PC-9 (cell line): ENCODE measurements at regions of chr1 and their contacts with region 1.

Region 1: DNA sequence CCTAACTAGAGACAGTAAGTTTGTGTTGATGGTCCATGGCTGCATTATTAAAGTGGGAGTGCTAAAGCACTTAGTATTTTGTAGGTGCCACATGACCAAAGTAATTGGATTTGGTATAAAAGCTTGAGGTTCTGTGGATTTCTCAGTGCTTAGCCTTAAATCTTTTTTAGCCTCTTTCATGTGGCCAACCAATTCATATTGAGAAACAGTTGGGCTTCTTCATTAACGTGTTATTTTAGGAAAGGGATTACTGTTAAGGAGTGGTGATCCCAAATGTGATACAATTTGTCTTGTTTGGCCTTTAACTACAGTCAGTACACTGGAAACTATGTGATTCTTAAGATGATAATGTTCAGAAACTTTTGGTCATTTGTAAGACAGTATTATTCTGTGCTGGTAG is 25.5 kb downstream of the MAN1A2 start:
- DNase-seq: no peak
- H3K4me3 ChIP-seq: no peak overlapping the region
- H3K27ac ChIP-seq: no peak overlapping the region
- H3K4me1 ChIP-seq: no peaks in the 10 kb centered on the region
- H3K27me3 ChIP-seq: no peaks in the 10 kb centered on the region
- CTCF ChIP-seq: no peak

Region 2: DNA sequence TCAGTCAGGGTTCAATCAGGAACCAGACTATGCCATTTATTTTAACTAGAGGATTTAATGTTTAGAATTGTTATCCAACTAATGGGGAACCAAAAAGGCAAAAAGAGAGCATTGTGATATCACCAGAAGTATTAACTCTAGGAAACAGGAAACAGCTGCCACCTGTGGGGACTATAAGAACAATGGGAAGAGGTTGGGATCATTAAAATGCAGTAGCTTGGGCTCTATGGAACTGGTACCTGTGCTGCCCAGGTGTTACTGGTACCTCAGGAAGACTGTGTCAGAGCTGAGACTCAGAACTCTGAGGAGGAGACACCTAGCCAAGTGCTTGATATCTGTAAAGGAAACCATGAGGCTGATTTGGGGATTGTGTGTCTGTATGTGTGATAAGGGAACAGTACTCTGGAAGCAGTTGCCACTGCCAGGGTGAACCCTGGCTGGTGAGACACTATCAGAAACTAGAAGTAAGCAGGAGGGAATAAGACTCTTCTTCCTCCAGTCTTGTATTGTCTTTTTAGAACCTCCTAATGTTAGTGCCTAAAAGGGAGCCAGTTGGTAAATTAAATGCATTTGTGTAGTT is 23.9 kb after region 1 on chr1:
- CTCF ChIA-PET with region 1: no interaction called
- POLR2A ChIA-PET with region 1: no interaction called
- intact Hi-C with region 1: no loop called
- DNase-seq: no peak
- H3K4me3 ChIP-seq: no peak overlapping the region
- H3K27ac ChIP-seq: no peak overlapping the region
- H3K4me1 ChIP-seq: no peaks in the 10 kb centered on the region
- H3K27me3 ChIP-seq: no peaks in the 10 kb centered on the region
- CTCF ChIP-seq: no peak

Region 3: DNA sequence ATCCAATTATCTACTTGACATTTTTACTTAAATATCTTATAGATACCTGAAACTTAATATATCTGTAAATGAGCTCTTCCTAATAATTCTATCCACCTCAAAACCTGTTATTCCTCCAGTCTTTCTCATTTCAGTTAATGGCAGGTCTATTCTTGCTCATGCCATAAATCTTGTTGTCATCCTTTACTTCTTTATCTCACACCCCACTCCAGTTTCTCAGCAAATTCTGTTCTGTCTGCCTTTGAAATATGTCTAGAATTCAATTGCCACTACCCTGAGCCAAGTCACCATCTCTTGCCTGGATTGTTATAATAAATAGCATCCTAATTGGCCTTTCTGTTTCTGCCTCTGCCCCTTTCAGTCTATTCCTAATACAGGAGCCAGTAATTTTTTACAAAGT is 80.3 kb after region 1 on chr1:
- CTCF ChIA-PET with region 1: no interaction called
- POLR2A ChIA-PET with region 1: no interaction called
- intact Hi-C with region 1: loop called (anchors 10 kb)
- DNase-seq: no peak
- H3K4me3 ChIP-seq: no peak overlapping the region
- H3K27ac ChIP-seq: no peak overlapping the region
- H3K4me1 ChIP-seq: no peaks in the 10 kb centered on the region
- H3K27me3 ChIP-seq: no peaks in the 10 kb centered on the region
- CTCF ChIP-seq: no peak

Region 4: DNA sequence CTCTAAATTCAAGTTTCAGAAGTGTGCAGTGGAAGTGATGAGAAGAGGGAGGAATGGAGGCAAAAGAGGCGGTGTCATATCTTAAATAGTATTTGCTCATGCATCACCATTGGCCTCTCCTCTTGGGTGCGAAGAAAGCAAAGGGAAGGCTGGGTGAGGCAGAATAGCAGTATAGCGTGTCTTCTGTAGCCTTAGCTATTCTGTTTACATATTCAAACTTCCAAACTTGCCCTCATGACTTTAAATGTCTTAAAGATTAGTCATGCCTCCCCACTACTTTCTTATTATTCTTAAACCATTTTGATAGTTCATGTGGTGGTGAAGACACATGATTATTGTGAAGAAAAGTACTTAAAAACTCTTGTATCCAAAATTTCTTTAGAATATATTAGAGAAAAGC is 108.5 kb after region 1 on chr1:
- CTCF ChIA-PET with region 1: no interaction called
- POLR2A ChIA-PET with region 1: no interaction called
- intact Hi-C with region 1: no loop called
- DNase-seq: no peak
- H3K4me3 ChIP-seq: no peak overlapping the region
- H3K27ac ChIP-seq: no peak overlapping the region
- H3K4me1 ChIP-seq: no peaks in the 10 kb centered on the region
- H3K27me3 ChIP-seq: no peaks in the 10 kb centered on the region
- CTCF ChIP-seq: no peak

Region 5: GRCh38 chr1:117615474-117615873 is 222.7 kb after region 1 on chr1:
- CTCF ChIA-PET with region 1: no interaction called
- POLR2A ChIA-PET with region 1: no interaction called
- intact Hi-C with region 1: no loop called
- DNase-seq: no peak
- H3K4me3 ChIP-seq: no peak overlapping the region
- H3K27ac ChIP-seq: no peak overlapping the region
- H3K4me1 ChIP-seq: peaks cover 18% of the 10 kb centered on the region
- H3K27me3 ChIP-seq: no peaks in the 10 kb centered on the region
- CTCF ChIP-seq: no peak